ENCODE measurements at regions of chr2 and their contacts with region 1.

Region 1: DNA sequence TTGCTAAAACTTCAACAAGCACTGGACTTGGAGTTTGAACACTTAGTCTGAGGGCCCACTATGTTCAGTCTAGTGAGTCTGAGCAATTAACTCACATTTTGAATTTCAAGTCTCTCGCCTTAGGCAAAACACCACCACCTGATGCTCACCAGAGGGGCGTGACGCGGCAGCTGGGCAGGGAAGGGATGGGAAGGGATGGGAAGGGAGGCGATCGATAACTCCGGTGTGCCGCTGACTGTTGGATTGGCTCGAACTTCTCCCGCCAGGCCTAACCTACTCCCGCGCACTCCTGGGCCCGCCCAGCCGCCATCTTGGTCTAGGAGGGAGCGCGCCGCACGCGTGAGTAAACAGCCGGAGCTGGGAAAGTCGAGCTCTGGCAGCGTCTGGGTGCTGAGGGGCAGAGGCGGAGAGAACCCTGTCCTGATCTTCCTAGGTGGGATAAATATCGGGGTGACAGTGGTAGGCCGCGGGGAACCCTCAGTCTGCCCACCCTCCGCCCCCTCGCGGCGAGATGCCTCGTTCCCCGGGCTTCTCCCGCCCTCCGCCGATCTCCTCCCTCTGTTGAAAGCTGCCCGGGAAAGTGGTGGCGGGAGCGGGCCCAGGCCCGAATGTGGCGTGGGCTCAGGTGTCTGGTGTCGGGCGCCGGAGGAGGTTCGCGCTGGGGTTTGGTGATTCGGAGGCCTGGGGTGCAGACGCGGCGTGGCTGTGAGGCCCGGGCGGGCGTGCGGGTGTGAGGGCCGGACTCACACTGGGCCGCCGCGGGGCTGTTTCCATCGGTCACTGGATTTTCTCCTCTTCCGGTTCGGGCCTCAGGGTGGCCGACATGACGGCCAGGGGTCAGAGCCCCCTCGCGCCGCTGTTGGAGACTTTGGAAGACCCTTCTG is at the start of gene RIF1:
- DNase-seq: peak; percentile 59 to 84
- ATAC-seq: peak; percentile 90 to 95 (median 92)
- H3K4me3 ChIP-seq: peak within 1 kb of the TSS; percentile 77
- H3K4me3 Mint-ChIP-seq: peak within 1 kb of the TSS; percentile 95
- H3K27ac ChIP-seq: peak within 1 kb of the TSS; percentile 80
- H3K27ac Mint-ChIP-seq: peak within 1 kb of the TSS; percentile 85 to 98
- H3K4me1 ChIP-seq: peaks cover 13% of the 10 kb centered on the region
- H3K4me1 Mint-ChIP-seq: peaks cover 20 to 22% of the 10 kb centered on the region in 2 donors
- H3K27me3 ChIP-seq: no peaks in the 10 kb centered on the region
- H3K27me3 Mint-ChIP-seq: peaks cover 0 to 3% of the 10 kb centered on the region in 2 donors
- CTCF ChIP-seq: peak; percentile 70
- total RNA-seq, gene RIF1: 37.0 to 52.0 (median 39.3) TPM

Region 2: DNA sequence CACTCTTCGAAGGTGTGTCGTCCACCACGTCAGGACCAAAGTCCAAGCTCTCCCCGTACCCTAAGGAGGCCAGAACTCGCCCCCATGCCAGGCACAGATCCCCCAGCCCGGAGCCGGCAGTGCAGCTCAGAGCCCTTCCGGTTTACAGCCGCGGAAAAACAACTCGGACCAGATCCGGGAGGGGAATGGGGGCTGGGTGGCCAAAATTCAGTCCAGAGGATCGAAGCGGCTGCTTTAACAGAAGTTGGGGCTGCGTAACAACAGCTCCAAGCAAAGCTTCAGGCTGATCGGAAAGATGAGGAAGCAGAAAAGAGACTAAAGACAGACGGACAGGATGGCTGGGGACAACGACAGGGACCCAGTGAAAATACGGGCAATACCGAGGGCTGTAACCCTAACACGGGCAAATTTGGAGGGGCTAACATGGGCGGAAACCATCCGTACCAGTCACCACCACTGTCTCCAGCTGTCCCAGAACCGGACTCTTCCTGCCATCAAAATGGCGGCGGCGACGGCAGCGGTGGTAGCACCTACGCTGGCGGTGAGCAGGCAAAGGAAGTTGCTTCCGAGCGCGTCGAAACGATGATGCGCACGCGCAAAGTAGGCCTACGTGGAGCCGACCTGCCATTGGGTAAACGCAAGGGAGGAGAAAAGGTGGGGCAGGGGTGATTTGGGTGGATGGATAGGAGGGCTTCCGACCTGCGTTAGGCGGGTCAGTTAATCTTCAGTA is 1822.5 kb before region 1 on chr2 and contains the start of gene MMADHC:
- intact Hi-C with region 1: loop called (anchors 10 kb)
- DNase-seq: peak; percentile 90 to 97
- ATAC-seq: peak; percentile 92 to 97 (median 95)
- H3K4me3 ChIP-seq: peak within 1 kb of the TSS; percentile 67
- H3K4me3 Mint-ChIP-seq: peak within 1 kb of the TSS; percentile 97
- H3K27ac ChIP-seq: peak within 1 kb of the TSS; percentile 88
- H3K27ac Mint-ChIP-seq: peak within 1 kb of the TSS; percentile 97 to 99
- H3K4me1 ChIP-seq: peaks cover 10% of the 10 kb centered on the region
- H3K4me1 Mint-ChIP-seq: peaks cover 46 to 57% of the 10 kb centered on the region in 2 donors
- H3K27me3 ChIP-seq: no peaks in the 10 kb centered on the region
- H3K27me3 Mint-ChIP-seq: peaks cover 14 to 24% of the 10 kb centered on the region in 2 donors
- CTCF ChIP-seq: no peak
- total RNA-seq, gene MMADHC: 59.6 to 73.9 (median 65.7) TPM

Region 3: DNA sequence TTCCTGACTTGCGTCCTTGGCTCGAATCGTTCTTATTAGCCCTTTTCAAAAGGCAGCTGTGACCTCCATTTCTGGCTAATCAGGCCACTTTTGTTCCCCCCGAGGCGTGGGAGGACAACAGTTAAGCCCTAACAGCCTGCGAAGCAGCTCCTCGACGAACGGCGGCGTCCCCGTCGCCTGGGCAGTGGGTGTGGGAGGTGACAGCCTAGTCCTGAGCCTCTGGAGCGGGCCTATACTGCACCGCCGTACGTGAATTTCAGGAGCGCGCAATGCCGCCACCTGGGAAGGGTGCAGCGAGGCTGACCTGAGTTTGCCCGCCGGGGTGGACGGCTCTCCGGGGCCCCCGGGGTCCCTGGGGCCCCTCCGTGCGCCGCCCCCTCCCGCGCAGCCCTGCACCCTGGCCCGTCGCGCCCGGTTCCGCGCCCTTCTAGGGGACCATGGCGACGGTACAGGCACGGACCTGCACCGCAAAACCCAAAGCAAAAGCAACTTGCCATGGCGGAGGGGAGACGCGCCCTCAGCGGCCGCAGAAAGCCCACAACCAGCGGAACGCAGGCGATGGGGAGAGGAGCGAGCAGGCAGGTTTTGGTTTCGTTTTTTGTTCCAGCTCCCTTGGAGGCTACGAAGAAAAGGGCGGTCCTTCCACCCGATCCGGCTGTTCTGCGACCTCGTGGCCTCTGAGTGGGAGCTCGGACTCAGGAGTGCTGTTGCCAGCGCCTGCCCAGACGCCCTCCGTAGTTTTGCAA is 148.4 kb before region 1 on chr2 and contains the start of gene RBM43:
- intact Hi-C with region 1: loop called (anchors 10 kb)
- DNase-seq: peak; percentile 74 to 93
- ATAC-seq: peak; percentile 86 to 88 (median 86)
- H3K4me3 ChIP-seq: peak within 1 kb of the TSS; percentile 87
- H3K4me3 Mint-ChIP-seq: peak within 1 kb of the TSS; percentile 95
- H3K27ac ChIP-seq: peak within 1 kb of the TSS; percentile 99
- H3K27ac Mint-ChIP-seq: peak within 1 kb of the TSS; percentile 95 to 96
- H3K4me1 ChIP-seq: peaks cover 10% of the 10 kb centered on the region
- H3K4me1 Mint-ChIP-seq: peaks cover 16 to 22% of the 10 kb centered on the region in 2 donors
- H3K27me3 ChIP-seq: no peaks in the 10 kb centered on the region
- H3K27me3 Mint-ChIP-seq: no peaks in the 10 kb centered on the region
- CTCF ChIP-seq: no peak
- total RNA-seq, gene RBM43: 5.6 to 12.4 (median 10.9) TPM

Region 4: DNA sequence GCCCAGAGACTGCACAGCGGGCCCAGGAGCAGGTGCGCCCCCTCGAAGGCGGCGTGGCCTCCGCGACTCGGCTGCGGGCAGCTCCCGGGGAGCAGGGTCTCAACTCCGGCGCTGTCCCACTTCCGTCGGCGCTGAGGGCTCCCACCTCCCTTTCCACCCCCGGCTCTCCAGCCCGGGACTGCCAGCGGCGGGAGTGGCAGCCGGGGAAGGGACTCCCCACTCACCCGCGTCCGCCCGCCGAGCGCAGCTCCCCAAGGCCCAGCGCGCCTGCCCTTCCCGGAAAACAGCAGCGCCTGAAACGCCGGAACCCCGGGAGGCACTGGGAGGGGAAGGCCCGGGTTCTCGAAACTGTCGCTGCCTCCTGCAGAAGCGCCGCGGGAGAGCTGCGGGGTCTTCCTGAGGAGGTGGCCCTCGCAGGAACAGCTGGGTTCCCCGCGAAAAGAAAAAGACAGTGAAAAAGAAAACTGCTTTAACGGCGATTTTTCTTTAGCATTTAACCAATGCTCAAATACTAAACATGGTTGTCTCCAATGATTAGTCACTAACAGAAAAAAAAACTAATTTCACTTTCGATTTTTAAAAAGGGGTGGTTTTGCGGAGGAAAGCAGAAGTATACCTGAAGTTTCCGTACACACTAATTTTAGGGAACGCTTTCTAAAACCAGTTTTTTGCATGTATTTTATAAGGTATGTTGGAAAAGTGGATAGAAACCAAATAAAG is 120.3 kb before region 1 on chr2 and contains the start of gene NMI:
- intact Hi-C with region 1: loop called (anchors 1 kb)
- DNase-seq: peak; percentile 70 to 77
- ATAC-seq: peak; percentile 71 to 81 (median 74)
- H3K4me3 ChIP-seq: peak within 1 kb of the TSS; percentile 79
- H3K4me3 Mint-ChIP-seq: peak within 1 kb of the TSS; percentile 94
- H3K27ac ChIP-seq: peak within 1 kb of the TSS; percentile 93
- H3K27ac Mint-ChIP-seq: peak within 1 kb of the TSS; percentile 82 to 96
- H3K4me1 ChIP-seq: peaks cover 19% of the 10 kb centered on the region
- H3K4me1 Mint-ChIP-seq: peaks cover 24 to 35% of the 10 kb centered on the region in 2 donors
- H3K27me3 ChIP-seq: no peaks in the 10 kb centered on the region
- H3K27me3 Mint-ChIP-seq: no peaks in the 10 kb centered on the region
- CTCF ChIP-seq: no peak
- total RNA-seq, gene NMI: 19.5 to 32.8 (median 23.0) TPM

Measured in natural killer cell (primary cell).